CD14-positive monocyte (primary cell): ENCODE measurements at regions of chr2 and their contacts with region 1.

Region 1: GRCh38 chr2:222424729-222425671 is 657 bp downstream of the SGPP2 start:
- DNase-seq: peak; percentile 12 to 84 (median 29)
- H3K4me3 ChIP-seq: peak overlapping the region; percentile 6 to 73 (median 36)
- H3K4me3 Mint-ChIP-seq: peak overlapping the region; percentile 84 to 93
- H3K27ac ChIP-seq: no peak overlapping the region
- H3K27ac Mint-ChIP-seq: peak overlapping the region in 2 of 7 donors; percentile 37 to 52
- H3K4me1 ChIP-seq: peaks cover 10 to 18% of the 10 kb centered on the region in 2 donors
- H3K4me1 Mint-ChIP-seq: peaks cover 22% of the 10 kb centered on the region
- H3K27me3 ChIP-seq: peaks cover 57 to 62% of the 10 kb centered on the region in 2 donors
- H3K27me3 Mint-ChIP-seq: peaks cover 63 to 77% (median 69%) of the 10 kb centered on the region in 3 donors
- CTCF ChIP-seq: no peak

Region 2: GRCh38 chr2:222364285-222364895 is 60.6 kb before region 1 on chr2:
- intact Hi-C with region 1: loop called in 1 of 2 experiments (anchors 10 kb)
- DNase-seq: peak; percentile 46 to 79 (median 67)
- H3K4me3 ChIP-seq: peak overlapping the region in 2 of 3 experiments; percentile 25 to 62
- H3K4me3 Mint-ChIP-seq: peak overlapping the region; percentile 32 to 84
- H3K27ac ChIP-seq: peak overlapping the region in 1 of 2 donors; percentile 69
- H3K27ac Mint-ChIP-seq: peak overlapping the region; percentile 73 to 93 (median 86)
- H3K4me1 ChIP-seq: peaks cover 42 to 49% of the 10 kb centered on the region in 2 donors
- H3K4me1 Mint-ChIP-seq: peaks cover 49% of the 10 kb centered on the region
- H3K27me3 ChIP-seq: no peaks in the 10 kb centered on the region
- H3K27me3 Mint-ChIP-seq: peaks cover 0 to 3% (median 0%) of the 10 kb centered on the region in 3 donors
- CTCF ChIP-seq: no peak

Region 3: GRCh38 chr2:222548992-222549391 is 124.0 kb after region 1 on chr2:
- intact Hi-C with region 1: no loop called
- DNase-seq: no peak
- H3K4me3 ChIP-seq: no peak overlapping the region
- H3K4me3 Mint-ChIP-seq: no peak overlapping the region
- H3K27ac ChIP-seq: no peak overlapping the region
- H3K27ac Mint-ChIP-seq: no peak overlapping the region
- H3K4me1 ChIP-seq: no peaks in the 10 kb centered on the region
- H3K4me1 Mint-ChIP-seq: no peaks in the 10 kb centered on the region
- H3K27me3 ChIP-seq: peaks cover 18 to 21% of the 10 kb centered on the region in 2 donors
- H3K27me3 Mint-ChIP-seq: peaks cover 19 to 31% (median 24%) of the 10 kb centered on the region in 3 donors
- CTCF ChIP-seq: no peak